CD8-positive, alpha-beta T cell (primary cell): ENCODE measurements at regions of chr16 and their contacts with region 1.

Region 1: GRCh38 chr16:2429034-2429770 is at the start of gene CCNF:
- DNase-seq: peak; percentile 96 to 98 (median 98)
- ATAC-seq: peak; percentile 98
- H3K4me3 ChIP-seq: peak within 1 kb of the TSS; percentile 81 to 92
- H3K4me3 Mint-ChIP-seq: peak within 1 kb of the TSS; percentile 85
- H3K27ac ChIP-seq: peak within 1 kb of the TSS; percentile 35 to 43
- H3K27ac Mint-ChIP-seq: peak within 1 kb of the TSS; percentile 64
- H3K4me1 ChIP-seq: peaks cover 12% of the 10 kb centered on the region
- H3K4me1 Mint-ChIP-seq: peaks cover 14% of the 10 kb centered on the region
- H3K27me3 ChIP-seq: no peaks in the 10 kb centered on the region
- H3K27me3 Mint-ChIP-seq: no peaks in the 10 kb centered on the region
- CTCF ChIP-seq: no peak
- total RNA-seq, gene CCNF: 0.61 to 1.2 TPM

Region 2: GRCh38 chr16:2223375-2224182 is 205.6 kb before region 1 on chr16 and contains the start of gene E4F1:
- CTCF ChIA-PET with region 1: no interaction called
- POLR2A ChIA-PET with region 1: no interaction called
- intact Hi-C with region 1: loop called in 1 of 2 experiments (anchors 1 kb)
- DNase-seq: peak; percentile 97 to 100 (median 99)
- ATAC-seq: peak; percentile 96
- H3K4me3 ChIP-seq: peak within 1 kb of the TSS; percentile 81 to 88
- H3K4me3 Mint-ChIP-seq: peak within 1 kb of the TSS; percentile 94
- H3K27ac ChIP-seq: peak within 1 kb of the TSS; percentile 67 to 76
- H3K27ac Mint-ChIP-seq: peak within 1 kb of the TSS; percentile 85
- H3K4me1 ChIP-seq: peaks cover 13% of the 10 kb centered on the region
- H3K4me1 Mint-ChIP-seq: peaks cover 22% of the 10 kb centered on the region
- H3K27me3 ChIP-seq: no peaks in the 10 kb centered on the region
- H3K27me3 Mint-ChIP-seq: no peaks in the 10 kb centered on the region
- CTCF ChIP-seq: no peak
- total RNA-seq, gene E4F1: 36.3 to 37.5 TPM

Region 3: DNA sequence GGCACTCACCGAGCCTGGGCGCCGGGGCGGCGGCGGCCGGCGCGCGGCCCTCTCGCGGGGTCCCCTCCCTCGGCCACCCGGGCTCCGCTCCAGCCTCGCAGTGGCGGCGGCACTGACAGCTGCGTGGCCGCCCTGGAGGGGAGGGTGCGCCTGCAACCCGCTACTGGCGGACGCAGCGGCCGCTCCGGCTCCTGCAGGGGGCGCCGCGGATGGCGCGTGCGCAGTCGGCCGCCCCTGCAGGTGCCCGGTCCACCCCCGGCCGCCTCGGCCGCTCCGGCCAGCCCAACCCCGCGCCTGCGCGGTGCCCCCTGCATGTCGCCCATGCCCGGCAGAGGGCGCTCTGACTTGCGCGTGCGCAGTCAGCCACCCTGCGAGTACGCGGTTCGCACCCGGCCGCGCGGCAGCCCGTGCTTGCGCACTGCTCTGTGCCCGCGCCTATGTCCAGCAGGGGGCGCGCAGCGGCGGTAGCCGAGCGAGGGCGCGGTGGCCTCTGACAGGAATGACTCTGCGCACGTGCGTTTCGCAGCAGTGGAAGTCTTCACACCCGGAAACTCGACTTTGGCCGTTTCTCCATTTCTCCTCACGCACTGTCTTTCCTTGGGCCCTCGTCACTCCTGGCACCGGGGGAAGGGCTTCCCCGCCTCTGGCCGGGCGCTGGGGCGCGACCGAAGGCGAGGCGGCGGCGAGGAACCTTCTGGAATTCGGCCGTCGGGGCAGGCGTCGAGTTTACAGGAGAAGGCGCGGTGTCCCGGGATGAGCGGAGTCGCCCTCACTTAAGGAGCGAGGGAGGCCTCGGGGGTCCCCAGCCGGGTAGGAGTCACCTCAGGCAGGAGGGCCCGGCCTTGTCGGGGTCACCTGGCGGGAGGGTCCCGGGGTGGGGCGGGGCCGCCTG is 88.4 kb before region 1 on chr16 and contains the start of gene ABCA3:
- CTCF ChIA-PET with region 1: interaction called, 4 read pairs
- POLR2A ChIA-PET with region 1: no interaction called
- intact Hi-C with region 1: loop called in 1 of 2 experiments (anchors 1 kb)
- DNase-seq: peak; percentile 87 to 98 (median 93)
- ATAC-seq: peak; percentile 89
- H3K4me3 ChIP-seq: peak within 1 kb of the TSS; percentile 59 to 62
- H3K4me3 Mint-ChIP-seq: peak within 1 kb of the TSS; percentile 85
- H3K27ac ChIP-seq: no peak within 1 kb of the TSS
- H3K27ac Mint-ChIP-seq: peak within 1 kb of the TSS; percentile 71
- H3K4me1 ChIP-seq: peaks cover 9% of the 10 kb centered on the region
- H3K4me1 Mint-ChIP-seq: peaks cover 13% of the 10 kb centered on the region
- H3K27me3 ChIP-seq: peaks cover 0 to 3% of the 10 kb centered on the region in 2 experiments
- H3K27me3 Mint-ChIP-seq: peaks cover 5% of the 10 kb centered on the region
- CTCF ChIP-seq: peak; percentile 100
- total RNA-seq, gene ABCA3: 3.7 to 4.0 TPM

Region 4: DNA sequence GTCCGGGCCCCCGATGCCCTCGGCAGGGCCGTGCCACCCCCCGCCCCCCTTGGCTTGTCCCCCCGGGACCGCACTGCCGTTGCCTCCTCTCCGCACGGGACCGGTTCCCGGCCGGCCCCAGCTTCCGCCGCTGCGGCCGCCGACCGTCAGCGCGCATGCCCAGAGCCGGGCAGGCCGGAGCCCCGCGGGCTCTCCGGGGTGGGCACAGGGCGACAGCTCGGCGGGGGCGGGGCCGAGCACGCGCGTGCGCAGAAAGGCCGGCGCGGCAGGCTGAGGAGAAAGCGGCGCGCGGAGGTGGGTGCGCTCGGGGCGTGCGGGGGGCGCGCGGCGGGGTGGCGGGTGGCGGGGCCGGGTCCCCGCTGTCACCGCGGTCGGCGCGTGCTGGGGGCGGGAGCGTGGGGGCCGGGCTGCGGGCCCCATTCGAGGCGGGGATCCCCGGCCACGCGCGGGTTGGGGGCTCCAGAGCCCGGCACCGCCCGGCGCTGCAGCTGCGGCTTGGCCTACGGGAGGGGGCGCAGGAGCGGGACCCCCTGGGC is 45.7 kb after region 1 on chr16 and contains the start of gene TBC1D24:
- CTCF ChIA-PET with region 1: no interaction called
- POLR2A ChIA-PET with region 1: no interaction called
- intact Hi-C with region 1: loop called (anchors 1 kb)
- DNase-seq: peak; percentile 48 to 89 (median 77)
- ATAC-seq: peak; percentile 61
- H3K4me3 ChIP-seq: peak within 1 kb of the TSS; percentile 62 to 70
- H3K4me3 Mint-ChIP-seq: peak within 1 kb of the TSS; percentile 77
- H3K27ac ChIP-seq: peak within 1 kb of the TSS in 1 of 2 experiments; percentile 36
- H3K27ac Mint-ChIP-seq: no peak within 1 kb of the TSS
- H3K4me1 ChIP-seq: peaks cover 29% of the 10 kb centered on the region
- H3K4me1 Mint-ChIP-seq: peaks cover 24% of the 10 kb centered on the region
- H3K27me3 ChIP-seq: peaks cover 11 to 20% of the 10 kb centered on the region in 2 experiments
- H3K27me3 Mint-ChIP-seq: peaks cover 15% of the 10 kb centered on the region
- CTCF ChIP-seq: no peak
- total RNA-seq, gene TBC1D24: 2.8 to 3.8 TPM

Region 5: GRCh38 chr16:2500918-2501750 is 71.9 kb after region 1 on chr16:
- CTCF ChIA-PET with region 1: interaction called, 3 read pairs
- POLR2A ChIA-PET with region 1: no interaction called
- intact Hi-C with region 1: loop called in 1 of 2 experiments (anchors 1 kb)
- DNase-seq: peak; percentile 67 to 89 (median 80)
- ATAC-seq: peak; percentile 100
- H3K4me3 ChIP-seq: no peak overlapping the region
- H3K4me3 Mint-ChIP-seq: no peak overlapping the region
- H3K27ac ChIP-seq: no peak overlapping the region
- H3K27ac Mint-ChIP-seq: no peak overlapping the region
- H3K4me1 ChIP-seq: peaks cover 6% of the 10 kb centered on the region
- H3K4me1 Mint-ChIP-seq: peaks cover 2% of the 10 kb centered on the region
- H3K27me3 ChIP-seq: no peaks in the 10 kb centered on the region
- H3K27me3 Mint-ChIP-seq: no peaks in the 10 kb centered on the region
- CTCF ChIP-seq: peak; percentile 87